A549 (cell line): ENCODE measurements at regions of chr1 and their contacts with region 1.

Region 1: GRCh38 chr1:66711420-66711819 is 40.8 kb upstream of the DYNLT5 start:
- DNase-seq: peak in 1 of 2 experiments; percentile 3
- ATAC-seq: peak in 1 of 2 experiments; percentile 68; a peak in 2 of 6 replicates
- H3K4me3 ChIP-seq: no peak overlapping the region
- H3K27ac ChIP-seq: no peak overlapping the region
- H3K4me1 ChIP-seq: no peaks in the 10 kb centered on the region
- CTCF ChIP-seq: 0 out of 3 replicates have a peak, but pooled peaks have one; percentile 7
- EP300 ChIP-seq: no peak
- POLR2A ChIP-seq: no peak
- RAD21 ChIP-seq: peak; percentile 23 to 27; a peak in 3 of 5 replicates

Region 2: GRCh38 chr1:66725885-66726665 is 14.7 kb after region 1 on chr1:
- CTCF ChIA-PET with region 1: interaction called, 24 read pairs
- POLR2A ChIA-PET with region 1: no interaction called
- DNase-seq: peak; percentile 2 to 49
- ATAC-seq: peak; percentile 64 to 81; a peak in 5 of 6 replicates
- H3K4me3 ChIP-seq: no peak overlapping the region
- H3K27ac ChIP-seq: no peak overlapping the region
- H3K4me1 ChIP-seq: no peaks in the 10 kb centered on the region
- CTCF ChIP-seq: peak; percentile 71
- EP300 ChIP-seq: no peak
- POLR2A ChIP-seq: no peak
- RAD21 ChIP-seq: peak; percentile 69 to 71

Region 3: DNA sequence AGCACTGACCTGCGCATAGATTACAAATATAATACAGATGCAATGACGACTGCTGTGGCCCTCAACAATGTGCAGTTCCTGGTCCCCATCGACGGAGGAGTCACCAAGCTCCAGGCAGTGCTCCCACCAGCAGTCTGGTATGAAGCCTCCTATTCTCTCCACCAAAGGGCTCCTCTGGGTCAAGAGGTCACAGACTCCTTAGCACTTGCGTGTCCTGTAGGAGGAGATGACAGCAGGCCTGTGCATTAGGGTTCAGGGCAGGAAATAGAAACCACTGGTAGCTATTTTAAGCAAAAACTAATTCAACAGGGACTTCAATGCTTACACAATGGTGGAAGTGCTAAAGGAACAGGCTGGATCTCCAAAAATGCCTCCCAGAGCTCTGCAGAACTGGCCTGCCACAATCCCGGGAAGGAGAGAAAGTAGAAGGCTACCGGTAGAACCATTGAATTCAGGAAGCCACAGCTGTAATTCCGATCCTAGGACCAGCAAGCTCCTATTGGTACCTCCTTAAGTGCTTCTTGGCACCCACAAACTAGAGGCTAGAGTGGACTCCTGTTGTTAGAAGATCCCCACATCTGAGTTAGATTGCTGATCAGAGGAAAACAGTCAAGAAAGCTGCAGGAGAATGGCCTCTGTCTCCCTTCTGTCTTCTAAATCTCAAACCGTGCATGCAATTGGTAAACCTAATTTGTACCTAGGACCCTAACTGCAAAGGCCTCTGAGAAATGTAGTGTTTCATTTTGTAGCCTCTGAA is 28.2 kb after region 1 on chr1:
- CTCF ChIA-PET with region 1: no interaction called
- POLR2A ChIA-PET with region 1: no interaction called
- DNase-seq: no peak
- ATAC-seq: no peak
- H3K4me3 ChIP-seq: no peak overlapping the region
- H3K27ac ChIP-seq: no peak overlapping the region
- H3K4me1 ChIP-seq: no peaks in the 10 kb centered on the region
- CTCF ChIP-seq: no peak
- EP300 ChIP-seq: no peak
- POLR2A ChIP-seq: no peak
- RAD21 ChIP-seq: no peak